ENCODE measurements at regions of chr11 and their contacts with region 1.

Region 1: GRCh38 chr11:124673333-124674167 is at the starts of genes SIAE and SPA17:
- ATAC-seq: peak; percentile 83 to 99 (median 98)
- H3K4me3 ChIP-seq: peak within 1 kb of the TSS; percentile 48 to 91 (median 72)
- H3K27ac ChIP-seq: peak within 1 kb of the TSS in 1 of 2 donors; percentile 0
- H3K4me1 ChIP-seq: peaks cover 6 to 9% of the 10 kb centered on the region in 2 donors
- total RNA-seq, gene SIAE: 3.2 to 78.6 (median 15.5) TPM
- total RNA-seq, gene SPA17: 13.7 to 71.4 (median 20.1) TPM

Region 2: GRCh38 chr11:124746621-124747243 is 73.2 kb after region 1 on chr11:
- in situ Hi-C with region 1: loop called in 7 of 9 experiments (anchors 5 to 25 kb)
- ATAC-seq: peak; percentile 64 to 92 (median 84)
- H3K4me3 ChIP-seq: peak overlapping the region; percentile 5 to 30 (median 9)
- H3K27ac ChIP-seq: no peak overlapping the region
- H3K4me1 ChIP-seq: peaks cover 0 to 4% of the 10 kb centered on the region in 2 donors

Region 3: GRCh38 chr11:124758317-124759203 is 85.0 kb after region 1 on chr11:
- in situ Hi-C with region 1: loop called in 6 of 9 experiments (anchors 25 kb)
- ATAC-seq: peak; percentile 24 to 90 (median 84)
- H3K4me3 ChIP-seq: peak overlapping the region; percentile 10 to 35 (median 26)
- H3K27ac ChIP-seq: no peak overlapping the region
- H3K4me1 ChIP-seq: peaks cover 5 to 25% of the 10 kb centered on the region in 2 donors

Region 4: DNA sequence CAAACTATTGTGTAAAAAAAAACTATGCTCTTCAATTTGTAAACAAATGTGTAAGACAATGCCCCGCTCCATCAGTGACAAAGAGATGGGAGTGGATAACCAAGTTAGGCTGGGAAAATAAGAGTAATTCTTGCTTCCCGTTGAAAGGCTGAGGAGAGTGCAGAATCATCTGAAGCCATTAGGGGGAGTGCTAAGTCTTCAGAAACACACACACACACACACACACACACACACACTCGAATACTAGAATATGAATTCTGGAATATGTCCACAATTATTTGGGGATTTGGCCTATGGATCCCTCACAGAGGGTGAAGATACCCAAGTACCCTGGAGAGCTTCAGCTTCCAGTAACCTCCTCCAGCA is 163.9 kb after region 1 on chr11:
- in situ Hi-C with region 1: loop called in 1 of 9 experiments (anchors 25 kb)
- ATAC-seq: peak in 4 of 8 experiments; percentile 28 to 58 (median 50)
- H3K4me3 ChIP-seq: no peak overlapping the region
- H3K27ac ChIP-seq: no peak overlapping the region
- H3K4me1 ChIP-seq: peaks cover 27 to 37% of the 10 kb centered on the region in 2 donors

Region 5: GRCh38 chr11:124865921-124866583 is 192.5 kb after region 1 on chr11:
- in situ Hi-C with region 1: loop called in 3 of 9 experiments (anchors 25 kb)
- ATAC-seq: peak; percentile 33 to 71 (median 59)
- H3K4me3 ChIP-seq: peak overlapping the region; percentile 18 to 34 (median 27)
- H3K27ac ChIP-seq: no peak overlapping the region
- H3K4me1 ChIP-seq: peaks cover 30 to 33% of the 10 kb centered on the region in 2 donors